ENCODE measurements at regions of chr17 and their contacts with region 1.

Region 1: DNA sequence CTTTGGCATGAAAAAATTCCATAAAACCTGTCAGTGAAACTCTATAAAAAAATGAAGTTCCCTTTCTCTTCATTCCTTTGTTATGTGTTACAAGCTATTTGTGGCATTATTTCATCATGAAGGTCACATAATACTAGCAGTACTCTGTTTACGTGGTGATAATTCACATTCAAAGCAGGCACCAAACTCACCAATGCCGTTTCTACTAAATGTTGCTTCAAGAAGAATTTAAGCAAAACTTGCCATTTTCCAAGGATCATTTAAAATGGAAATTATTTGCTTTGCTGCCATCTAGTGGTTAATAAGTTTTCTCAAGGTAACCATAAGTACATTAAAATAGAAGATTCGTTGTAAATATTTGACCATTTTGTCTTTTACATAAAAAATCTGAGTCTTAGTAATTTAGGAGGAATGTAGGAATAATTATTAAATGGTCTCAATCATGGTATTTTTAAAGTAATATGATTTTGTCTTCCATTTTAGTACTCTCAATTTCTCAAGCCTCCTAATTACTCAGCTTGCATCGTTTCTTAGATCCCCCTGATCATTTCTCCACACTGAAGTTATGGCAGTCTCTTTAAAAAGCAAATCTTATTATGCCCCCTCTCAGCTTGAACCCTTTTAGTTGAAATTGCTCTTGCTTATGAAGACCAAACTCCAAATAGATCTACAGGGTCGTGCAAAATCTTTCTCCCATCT is 80.8 kb downstream of the OMG start:
- DNase-seq: no peak
- ATAC-seq: no peak
- H3K4me3 Mint-ChIP-seq: no peak overlapping the region
- H3K27ac Mint-ChIP-seq: no peak overlapping the region
- H3K4me1 Mint-ChIP-seq: no peaks in the 10 kb centered on the region
- H3K27me3 Mint-ChIP-seq: no peaks in the 10 kb centered on the region
- CTCF ChIP-seq: peak; percentile 66

Region 2: DNA sequence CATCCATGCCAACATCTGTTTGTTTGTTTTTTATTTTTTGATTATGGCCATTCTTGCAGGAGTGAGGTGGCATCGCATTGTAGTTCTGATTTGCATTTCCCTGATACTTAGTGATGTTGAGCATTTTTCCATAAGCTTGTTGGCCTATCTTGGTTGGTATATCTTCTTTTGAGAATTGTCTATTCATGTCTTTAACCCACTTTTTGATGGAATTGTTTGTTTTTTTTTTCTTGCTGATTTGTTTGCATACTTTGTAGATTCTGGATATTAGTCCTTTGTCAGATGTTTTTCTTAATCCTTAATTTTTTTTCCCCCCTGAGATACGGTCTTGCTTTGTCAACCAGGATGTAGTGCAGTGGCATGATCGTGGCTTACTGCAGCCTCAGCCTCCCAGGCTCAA is 202.4 kb before region 1 on chr17:
- CTCF ChIA-PET with region 1: interaction called, 9 read pairs
- POLR2A ChIA-PET with region 1: no interaction called
- intact Hi-C with region 1: loop called (anchors 5 kb)
- DNase-seq: no peak
- ATAC-seq: no peak
- H3K4me3 Mint-ChIP-seq: no peak overlapping the region
- H3K27ac Mint-ChIP-seq: no peak overlapping the region
- H3K4me1 Mint-ChIP-seq: peaks cover 8% of the 10 kb centered on the region
- H3K27me3 Mint-ChIP-seq: peaks cover 11% of the 10 kb centered on the region
- CTCF ChIP-seq: no peak

Region 3: GRCh38 chr17:31226950-31227349 is 10.7 kb after region 1 on chr17:
- CTCF ChIA-PET with region 1: interaction called, 12 read pairs
- POLR2A ChIA-PET with region 1: no interaction called
- intact Hi-C with region 1: no loop called
- DNase-seq: no peak
- ATAC-seq: no peak
- H3K4me3 Mint-ChIP-seq: no peak overlapping the region
- H3K27ac Mint-ChIP-seq: no peak overlapping the region
- H3K4me1 Mint-ChIP-seq: peaks cover 2% of the 10 kb centered on the region
- H3K27me3 Mint-ChIP-seq: no peaks in the 10 kb centered on the region
- CTCF ChIP-seq: no peak

Region 4: GRCh38 chr17:31241116-31241515 is 24.9 kb after region 1 on chr17:
- CTCF ChIA-PET with region 1: no interaction called
- POLR2A ChIA-PET with region 1: no interaction called
- intact Hi-C with region 1: no loop called
- DNase-seq: no peak
- ATAC-seq: no peak
- H3K4me3 Mint-ChIP-seq: no peak overlapping the region
- H3K27ac Mint-ChIP-seq: no peak overlapping the region
- H3K4me1 Mint-ChIP-seq: peaks cover 2% of the 10 kb centered on the region
- H3K27me3 Mint-ChIP-seq: no peaks in the 10 kb centered on the region
- CTCF ChIP-seq: no peak

Region 5: GRCh38 chr17:31251105-31251969 is 35.1 kb after region 1 on chr17:
- CTCF ChIA-PET with region 1: interaction called, 10 read pairs
- POLR2A ChIA-PET with region 1: no interaction called
- intact Hi-C with region 1: no loop called
- DNase-seq: no peak
- ATAC-seq: no peak
- H3K4me3 Mint-ChIP-seq: no peak overlapping the region
- H3K27ac Mint-ChIP-seq: no peak overlapping the region
- H3K4me1 Mint-ChIP-seq: peaks cover 4% of the 10 kb centered on the region
- H3K27me3 Mint-ChIP-seq: no peaks in the 10 kb centered on the region
- CTCF ChIP-seq: no peak

Region 6: DNA sequence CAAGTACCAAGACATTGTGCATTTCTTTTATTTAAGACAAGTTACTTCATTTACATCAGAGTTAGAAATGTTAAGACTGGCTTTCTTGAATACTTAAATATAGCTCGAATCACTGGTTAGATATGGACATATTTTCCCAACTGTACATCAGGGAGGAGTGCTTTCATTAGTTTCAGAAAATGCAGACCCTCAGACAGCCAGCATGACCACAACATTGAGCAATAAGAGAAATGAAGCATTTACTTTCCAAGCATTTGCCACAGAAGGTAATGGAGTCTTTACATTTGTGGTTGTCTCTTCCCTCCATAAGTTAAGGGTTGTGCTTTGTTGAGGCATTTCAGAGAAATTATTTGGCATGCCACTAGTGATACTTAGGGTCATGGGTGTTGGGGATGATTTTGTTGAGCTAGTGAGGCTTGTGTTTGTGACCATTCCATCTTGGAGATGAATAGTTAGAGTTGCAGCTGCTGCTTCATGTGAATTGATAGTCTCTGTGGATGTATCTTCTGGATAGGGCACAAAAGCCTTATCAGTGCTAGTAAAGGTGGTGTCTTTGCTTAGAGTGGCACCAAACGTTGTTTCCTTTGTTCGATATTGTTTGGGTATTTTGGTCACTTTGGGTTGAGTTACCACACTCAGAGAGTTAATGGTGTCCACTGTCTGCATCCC is 78.8 kb after region 1 on chr17:
- CTCF ChIA-PET with region 1: no interaction called
- POLR2A ChIA-PET with region 1: no interaction called
- intact Hi-C with region 1: no loop called
- DNase-seq: no peak
- ATAC-seq: no peak
- H3K4me3 Mint-ChIP-seq: no peak overlapping the region
- H3K27ac Mint-ChIP-seq: no peak overlapping the region
- H3K4me1 Mint-ChIP-seq: peaks cover 10% of the 10 kb centered on the region
- H3K27me3 Mint-ChIP-seq: no peaks in the 10 kb centered on the region
- CTCF ChIP-seq: no peak

Measured in activated CD8-positive, alpha-beta T cell treated with anti-CD3 and anti-CD28 coated beads for 36 hours (primary cell).